ENCODE measurements at regions of chr15 and their contacts with region 1.

Region 1: GRCh38 chr15:55221090-55222011 is 24.6 kb upstream of the RSL24D1 start:
- DNase-seq: no peak
- H3K4me3 ChIP-seq: no peak overlapping the region
- H3K27ac ChIP-seq: peak overlapping the region in 1 of 2 donors; percentile 38
- H3K4me1 ChIP-seq: no peaks in the 10 kb centered on the region
- H3K27me3 ChIP-seq: no peaks in the 10 kb centered on the region
- CTCF ChIP-seq: no peak
- POLR2A ChIP-seq: no peak

Region 2: DNA sequence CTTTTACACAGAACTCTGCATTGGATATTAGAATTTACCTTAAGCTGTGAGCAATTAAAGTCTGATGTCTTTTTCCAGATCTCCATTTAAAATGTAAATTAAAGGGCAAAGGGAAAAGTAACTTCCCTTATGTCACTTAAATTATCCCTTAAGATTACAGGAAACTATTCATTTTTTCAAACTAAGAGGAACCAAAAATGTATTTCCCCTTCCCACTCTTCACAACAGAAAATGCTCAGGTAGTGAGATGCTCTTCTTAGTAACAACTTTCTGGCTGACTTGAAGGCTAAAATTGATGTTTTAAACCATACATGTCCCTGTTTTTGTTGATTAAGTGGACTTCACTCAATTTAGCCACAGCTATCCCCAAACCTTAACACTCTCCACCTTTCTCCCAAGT is 42.2 kb before region 1 on chr15:
- intact Hi-C with region 1: no loop called
- DNase-seq: no peak
- H3K4me3 ChIP-seq: no peak overlapping the region
- H3K27ac ChIP-seq: no peak overlapping the region
- H3K4me1 ChIP-seq: no peaks in the 10 kb centered on the region
- H3K27me3 ChIP-seq: no peaks in the 10 kb centered on the region
- CTCF ChIP-seq: no peak
- POLR2A ChIP-seq: no peak

Region 3: DNA sequence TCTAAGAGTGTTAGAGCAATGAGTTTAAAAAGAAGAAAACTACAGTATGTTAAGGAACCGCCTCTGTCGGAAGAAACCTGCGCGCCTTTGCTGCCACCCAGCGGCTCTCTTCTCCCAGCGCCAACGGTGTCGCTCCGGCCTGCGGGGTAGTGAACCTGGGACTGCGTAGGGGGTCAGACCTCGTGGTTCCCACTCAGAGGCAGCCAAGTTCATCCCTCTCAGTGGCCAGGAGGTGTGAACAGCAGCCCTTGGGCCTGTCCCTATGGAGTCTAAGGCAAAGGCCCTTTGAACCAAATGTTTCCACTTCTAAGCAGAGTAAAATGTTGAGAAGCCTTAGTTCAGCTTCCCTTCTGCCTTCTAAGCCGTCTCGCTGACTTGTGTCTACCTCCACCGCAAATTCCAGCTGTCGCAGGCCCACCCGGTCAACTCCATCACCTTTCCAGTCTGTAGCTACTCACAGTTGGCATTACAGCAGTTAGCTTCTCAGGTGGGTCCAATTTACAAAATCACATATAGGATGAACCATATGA is 69.2 kb after region 1 on chr15:
- intact Hi-C with region 1: loop called (anchors 2 kb)
- DNase-seq: peak; percentile 82
- H3K4me3 ChIP-seq: peak overlapping the region; percentile 81 to 93
- H3K27ac ChIP-seq: peak overlapping the region; percentile 93 to 97
- H3K4me1 ChIP-seq: no peaks in the 10 kb centered on the region
- H3K27me3 ChIP-seq: no peaks in the 10 kb centered on the region
- CTCF ChIP-seq: peak; percentile 64 to 89 (median 84)
- POLR2A ChIP-seq: no peak

Region 4: DNA sequence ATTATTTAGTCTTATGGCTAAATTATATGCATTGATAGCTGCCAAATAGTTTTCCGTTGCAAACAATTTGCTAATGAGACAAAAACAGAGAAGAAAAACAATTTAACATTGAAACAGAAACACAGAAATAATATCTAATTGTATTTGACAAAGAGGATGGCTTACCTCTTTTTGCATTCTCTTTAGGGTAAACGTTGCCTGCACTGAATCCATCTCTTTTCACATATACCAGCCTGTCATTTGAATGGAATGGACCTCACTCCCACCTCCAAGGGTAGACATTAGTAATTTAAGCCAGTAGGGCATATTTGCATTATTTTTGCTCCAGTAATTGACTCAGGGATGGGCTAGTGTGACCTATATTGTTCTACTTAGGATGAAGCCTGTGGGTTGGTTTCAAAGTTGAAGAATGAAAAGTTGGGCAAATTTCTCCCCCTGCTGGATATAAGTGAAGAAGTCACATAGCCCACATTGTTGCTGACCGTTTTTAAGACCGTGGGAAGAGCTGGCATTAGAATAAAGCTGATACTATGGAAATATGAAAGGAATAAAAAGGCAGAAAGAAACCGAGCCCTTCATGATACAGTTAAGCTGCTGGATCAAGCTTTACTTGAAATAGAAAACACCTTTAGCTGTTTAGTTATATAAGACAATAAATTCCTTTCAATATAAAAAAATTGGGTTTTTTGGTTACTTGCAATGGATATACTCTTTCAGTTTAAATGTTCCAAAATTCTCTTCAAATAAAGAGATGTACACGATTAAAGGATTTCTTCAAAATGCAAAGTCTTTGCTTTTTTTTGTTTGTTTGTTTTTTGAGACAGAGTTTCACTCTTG is 213.9 kb after region 1 on chr15:
- intact Hi-C with region 1: loop called (anchors 10 kb)
- DNase-seq: no peak
- H3K4me3 ChIP-seq: no peak overlapping the region
- H3K27ac ChIP-seq: no peak overlapping the region
- H3K4me1 ChIP-seq: no peaks in the 10 kb centered on the region
- H3K27me3 ChIP-seq: no peaks in the 10 kb centered on the region
- CTCF ChIP-seq: peak in 3 of 4 experiments; percentile 43 to 53 (median 46)
- POLR2A ChIP-seq: no peak

Region 5: GRCh38 chr15:55552926-55553325 is 331.6 kb after region 1 on chr15:
- intact Hi-C with region 1: no loop called
- DNase-seq: no peak
- H3K4me3 ChIP-seq: no peak overlapping the region
- H3K27ac ChIP-seq: no peak overlapping the region
- H3K4me1 ChIP-seq: no peaks in the 10 kb centered on the region
- H3K27me3 ChIP-seq: no peaks in the 10 kb centered on the region
- CTCF ChIP-seq: no peak
- POLR2A ChIP-seq: no peak